ENCODE measurements at regions of chr6 and their contacts with region 1.

Region 1: GRCh38 chr6:35534407-35535170 is 21.9 kb upstream of the TULP1 start:
- DNase-seq: no peak
- ATAC-seq: no peak
- H3K4me3 Mint-ChIP-seq: no peak overlapping the region
- H3K27ac Mint-ChIP-seq: no peak overlapping the region
- H3K4me1 Mint-ChIP-seq: peaks cover 10% of the 10 kb centered on the region
- H3K27me3 Mint-ChIP-seq: peaks cover 16% of the 10 kb centered on the region

Region 2: DNA sequence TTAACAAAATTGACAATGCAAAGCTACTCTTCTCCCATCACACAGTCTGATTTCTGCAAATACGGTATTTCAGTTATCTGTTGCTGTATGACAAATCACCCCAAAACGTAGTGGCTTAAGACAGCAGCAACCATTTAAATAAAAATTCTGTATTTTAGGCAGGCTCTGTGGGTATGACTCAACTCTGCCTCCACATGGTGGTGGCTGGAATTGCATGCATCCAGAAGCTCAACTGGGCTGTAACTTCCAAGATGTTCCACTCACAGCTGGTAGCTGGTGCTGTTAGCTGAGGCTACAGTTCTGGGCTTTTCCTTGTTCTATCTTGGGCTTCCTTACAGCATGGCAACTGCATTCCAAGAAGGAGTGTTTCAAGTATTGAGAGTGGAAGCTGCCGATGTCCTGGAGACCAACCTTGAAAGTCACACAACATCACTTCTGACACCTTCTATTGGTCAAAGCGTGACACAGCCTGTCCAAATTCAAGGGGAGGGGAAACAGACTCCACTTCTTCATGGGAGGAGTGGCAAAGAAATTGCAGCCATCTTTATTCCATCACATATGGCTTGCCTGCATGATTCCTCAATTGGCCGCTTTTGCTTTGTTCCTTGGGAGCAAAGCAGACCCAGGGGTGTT is 17.8 kb after region 1 on chr6:
- CTCF ChIA-PET with region 1: interaction called, 25 read pairs
- POLR2A ChIA-PET with region 1: interaction called, 3 read pairs
- DNase-seq: peak; percentile 78
- ATAC-seq: peak; percentile 64
- H3K4me3 Mint-ChIP-seq: no peak overlapping the region
- H3K27ac Mint-ChIP-seq: no peak overlapping the region
- H3K4me1 Mint-ChIP-seq: peaks cover 8% of the 10 kb centered on the region
- H3K27me3 Mint-ChIP-seq: peaks cover 14% of the 10 kb centered on the region

Measured in activated CD8-positive, alpha-beta T cell treated with anti-CD3 and anti-CD28 coated beads, Interleukin-2, amount 10 ng/mL, durations not matched to agents 7 days and 5 days (primary cell).